ENCODE measurements at regions of chr11 and their contacts with region 1.

Region 1: DNA sequence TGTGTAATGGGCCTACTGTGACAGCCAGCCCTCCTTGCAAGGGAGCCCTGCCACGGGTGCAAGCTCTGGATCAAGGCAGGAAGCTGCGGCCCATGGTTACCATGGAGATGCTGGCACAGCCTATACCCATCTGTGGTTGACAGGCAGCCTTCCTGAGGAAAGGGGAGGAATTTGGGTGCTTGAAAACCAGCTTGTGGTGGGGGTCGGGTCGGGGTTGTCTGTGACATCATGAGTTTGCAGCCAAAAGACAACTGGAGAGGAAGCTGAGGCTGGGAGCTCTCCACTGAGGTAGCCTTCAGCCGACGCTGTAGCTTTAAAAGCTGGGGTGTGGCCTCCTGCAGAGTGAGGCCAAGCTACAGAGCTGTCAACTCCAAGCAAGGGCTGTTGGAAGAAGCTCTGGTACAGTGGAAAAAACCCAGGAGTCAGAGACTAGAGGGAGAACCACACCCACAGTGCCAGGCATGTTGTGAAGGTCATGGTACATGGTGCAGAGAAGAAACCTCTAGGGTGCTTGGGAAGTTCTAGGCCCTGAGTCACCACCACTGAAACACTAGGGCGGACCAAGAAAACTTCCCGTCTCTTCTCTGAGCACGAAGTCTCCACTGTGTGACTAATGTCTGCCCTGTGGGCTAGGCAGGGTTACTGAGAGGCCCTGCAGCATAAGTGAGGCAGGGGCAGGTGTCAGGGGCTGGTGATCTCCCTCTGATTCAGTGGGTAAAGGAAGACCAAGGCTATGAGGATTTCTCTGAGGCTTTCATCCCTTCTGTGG is 10.8 kb upstream of the LDHA start:
- DNase-seq: peak; percentile 82
- H3K4me3 Mint-ChIP-seq: peak overlapping the region; percentile 70
- H3K27ac Mint-ChIP-seq: peak overlapping the region; percentile 99
- H3K4me1 Mint-ChIP-seq: peaks cover 44% of the 10 kb centered on the region
- H3K27me3 Mint-ChIP-seq: no peaks in the 10 kb centered on the region

Region 2: DNA sequence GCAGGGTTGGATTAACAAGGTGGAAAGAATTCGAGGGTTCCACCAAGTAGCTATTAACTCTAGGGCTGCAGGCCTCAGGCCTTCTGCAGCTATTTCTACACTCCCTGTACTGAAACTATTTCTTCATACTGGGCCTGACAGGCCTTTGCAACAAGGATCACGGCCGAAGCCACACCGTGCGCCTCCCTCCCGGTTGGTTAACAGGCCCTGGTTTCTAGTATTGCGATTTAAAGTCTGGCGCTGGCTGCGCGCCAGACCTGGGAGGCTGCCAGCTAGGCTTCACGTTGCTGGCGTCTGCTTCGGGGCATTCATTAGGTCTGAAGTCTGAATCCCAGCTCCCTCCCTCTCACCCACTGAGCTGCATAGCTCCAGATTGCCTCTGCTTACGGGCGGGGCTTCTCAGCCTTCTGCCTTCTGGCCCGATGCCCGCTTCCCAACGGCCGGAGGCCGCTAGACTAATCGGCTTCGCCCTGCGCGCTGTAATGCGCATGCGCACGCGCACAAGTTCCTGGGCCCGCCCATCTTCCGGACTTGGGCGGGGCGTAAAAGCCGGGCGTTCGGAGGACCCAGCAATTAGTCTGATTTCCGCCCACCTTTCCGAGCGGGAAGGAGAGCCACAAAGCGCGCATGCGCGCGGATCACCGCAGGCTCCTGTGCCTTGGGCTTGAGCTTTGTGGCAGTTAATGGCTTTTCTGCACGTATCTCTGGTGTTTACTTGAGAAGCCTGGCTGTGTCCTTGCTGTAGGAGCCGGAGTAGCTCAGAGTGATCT is 12.3 kb after region 1 on chr11:
- CTCF ChIA-PET with region 1: interaction called, 12 read pairs
- DNase-seq: peak; percentile 96
- H3K4me3 Mint-ChIP-seq: peak overlapping the region; percentile 99
- H3K27ac Mint-ChIP-seq: peak overlapping the region; percentile 99
- H3K4me1 Mint-ChIP-seq: peaks cover 66% of the 10 kb centered on the region
- H3K27me3 Mint-ChIP-seq: no peaks in the 10 kb centered on the region

Measured in activated naive CD4-positive, alpha-beta T cell treated with anti-CD3 and anti-CD28 coated beads, Interleukin-2, amount 10 ng/mL, durations not matched to agents 7 days and 5 days (primary cell).